Heart left ventricle (tissue), 16 donors: ENCODE measurements at regions of chr1 and their contacts with region 1.

Region 1: DNA sequence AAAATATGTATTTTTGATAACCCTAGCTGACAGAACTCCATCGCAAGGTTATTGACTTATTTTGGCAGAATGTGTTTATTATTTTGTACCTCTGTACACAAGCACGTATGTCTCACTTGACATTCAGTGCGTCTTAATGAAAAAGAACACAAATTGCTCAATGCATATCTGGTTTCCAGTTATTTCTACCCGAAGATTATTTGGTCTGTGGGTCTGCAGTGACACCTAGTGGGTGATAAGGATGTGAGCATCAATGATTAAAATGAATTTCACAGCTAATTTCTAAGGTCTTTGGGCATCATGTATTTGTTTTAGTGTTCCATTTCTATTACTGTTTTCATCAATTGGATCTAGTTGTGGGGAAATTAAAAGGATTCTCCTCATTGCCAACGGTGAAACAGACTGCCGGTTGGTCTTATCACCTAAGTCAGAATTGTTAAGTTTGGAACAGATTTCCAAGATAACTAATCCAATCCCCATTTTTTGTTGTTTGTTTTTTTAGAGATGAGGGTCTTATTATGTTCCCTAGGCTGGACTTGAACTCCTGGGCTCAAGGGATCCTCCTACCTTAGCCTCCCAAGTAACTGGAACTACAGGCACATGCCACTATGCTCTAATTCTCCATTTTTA is 13.9 kb downstream of the DDX20 start:
- DNase-seq: peak in 1 of 5 donors; percentile 31
- ATAC-seq: peak in 3 of 4 donors; percentile 41 to 48 (median 42)
- H3K4me3 ChIP-seq: no peak overlapping the region
- H3K27ac ChIP-seq: no peak overlapping the region
- H3K4me1 ChIP-seq: peaks cover 0 to 3% (median 0%) of the 10 kb centered on the region in 12 donors
- H3K27me3 ChIP-seq: no peaks in the 10 kb centered on the region
- CTCF ChIP-seq: peak; percentile 71 to 89 (median 79)
- POLR2A ChIP-seq: no peak

Region 2: GRCh38 chr1:111516005-111516535 is 253.6 kb before region 1 on chr1:
- intact Hi-C with region 1: no loop called
- DNase-seq: peak in 4 of 5 donors; percentile 78 to 89 (median 80)
- ATAC-seq: peak; percentile 62 to 84 (median 80)
- H3K4me3 ChIP-seq: peak overlapping the region in 11 of 12 donors; percentile 28 to 58 (median 49)
- H3K27ac ChIP-seq: peak overlapping the region; percentile 66 to 96 (median 90)
- H3K4me1 ChIP-seq: peaks cover 2 to 74% (median 35%) of the 10 kb centered on the region in 12 donors
- H3K27me3 ChIP-seq: no peaks in the 10 kb centered on the region
- CTCF ChIP-seq: peak; percentile 13 to 60 (median 38)
- POLR2A ChIP-seq: no peak

Region 3: GRCh38 chr1:111656086-111657017 is 113.3 kb before region 1 on chr1:
- intact Hi-C with region 1: loop called in 1 of 10 experiments (anchors 5 kb)
- DNase-seq: no peak
- ATAC-seq: peak; percentile 19 to 73 (median 56)
- H3K4me3 ChIP-seq: no peak overlapping the region
- H3K27ac ChIP-seq: peak overlapping the region in 2 of 12 donors; percentile 3 to 40
- H3K4me1 ChIP-seq: peaks cover 0 to 67% (median 25%) of the 10 kb centered on the region in 12 donors
- H3K27me3 ChIP-seq: no peaks in the 10 kb centered on the region
- CTCF ChIP-seq: peak; percentile 42 to 82 (median 68)
- POLR2A ChIP-seq: no peak

Region 4: DNA sequence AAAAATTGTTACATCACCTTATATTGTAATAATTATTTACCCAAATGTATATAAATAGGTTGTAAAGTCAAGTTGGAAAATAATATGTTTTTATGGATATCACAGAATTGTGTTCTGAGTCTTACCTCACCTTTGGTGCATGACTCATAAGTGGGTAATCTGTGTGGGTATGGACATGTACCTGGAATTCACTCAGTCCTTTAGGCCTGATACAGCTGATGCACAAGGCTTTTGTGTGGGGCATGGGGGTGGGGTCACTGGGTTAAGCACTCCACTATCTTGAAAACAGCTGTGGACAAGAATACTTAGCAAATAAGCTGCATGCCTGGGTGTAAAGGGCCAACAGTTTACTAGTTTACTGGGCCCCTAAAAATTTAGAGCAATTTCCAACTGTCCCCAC is 64.9 kb before region 1 on chr1:
- intact Hi-C with region 1: no loop called
- DNase-seq: no peak
- ATAC-seq: no peak
- H3K4me3 ChIP-seq: no peak overlapping the region
- H3K27ac ChIP-seq: no peak overlapping the region
- H3K4me1 ChIP-seq: peaks cover 0 to 4% (median 0%) of the 10 kb centered on the region in 12 donors
- H3K27me3 ChIP-seq: no peaks in the 10 kb centered on the region
- CTCF ChIP-seq: no peak
- POLR2A ChIP-seq: no peak

Region 5: DNA sequence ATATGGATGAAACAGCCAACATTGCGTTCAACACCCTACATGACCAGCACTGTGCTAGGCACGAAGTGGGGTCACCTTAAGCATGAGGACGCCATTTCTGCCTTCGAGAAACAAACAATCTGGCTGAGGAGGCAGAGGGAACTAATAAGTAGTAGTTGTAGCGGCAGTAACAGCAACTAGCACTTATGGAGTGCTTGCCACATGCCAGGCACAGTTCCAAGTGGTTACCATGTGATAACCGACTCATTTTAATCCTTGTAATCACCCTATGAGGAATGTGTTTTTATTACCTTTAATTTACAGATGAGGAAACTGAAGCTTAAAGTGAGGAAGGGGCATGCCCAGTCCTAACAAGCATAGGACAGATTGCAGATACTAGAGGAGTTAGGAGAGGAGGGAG is 186.1 kb after region 1 on chr1:
- intact Hi-C with region 1: no loop called
- DNase-seq: no peak
- ATAC-seq: peak in 1 of 4 donors; percentile 49
- H3K4me3 ChIP-seq: no peak overlapping the region
- H3K27ac ChIP-seq: no peak overlapping the region
- H3K4me1 ChIP-seq: peaks cover 0 to 66% (median 20%) of the 10 kb centered on the region in 12 donors
- H3K27me3 ChIP-seq: no peaks in the 10 kb centered on the region
- CTCF ChIP-seq: no peak
- POLR2A ChIP-seq: no peak